SK-N-SH (cell line): ENCODE measurements at regions of chr9 and their contacts with region 1.

Region 1: DNA sequence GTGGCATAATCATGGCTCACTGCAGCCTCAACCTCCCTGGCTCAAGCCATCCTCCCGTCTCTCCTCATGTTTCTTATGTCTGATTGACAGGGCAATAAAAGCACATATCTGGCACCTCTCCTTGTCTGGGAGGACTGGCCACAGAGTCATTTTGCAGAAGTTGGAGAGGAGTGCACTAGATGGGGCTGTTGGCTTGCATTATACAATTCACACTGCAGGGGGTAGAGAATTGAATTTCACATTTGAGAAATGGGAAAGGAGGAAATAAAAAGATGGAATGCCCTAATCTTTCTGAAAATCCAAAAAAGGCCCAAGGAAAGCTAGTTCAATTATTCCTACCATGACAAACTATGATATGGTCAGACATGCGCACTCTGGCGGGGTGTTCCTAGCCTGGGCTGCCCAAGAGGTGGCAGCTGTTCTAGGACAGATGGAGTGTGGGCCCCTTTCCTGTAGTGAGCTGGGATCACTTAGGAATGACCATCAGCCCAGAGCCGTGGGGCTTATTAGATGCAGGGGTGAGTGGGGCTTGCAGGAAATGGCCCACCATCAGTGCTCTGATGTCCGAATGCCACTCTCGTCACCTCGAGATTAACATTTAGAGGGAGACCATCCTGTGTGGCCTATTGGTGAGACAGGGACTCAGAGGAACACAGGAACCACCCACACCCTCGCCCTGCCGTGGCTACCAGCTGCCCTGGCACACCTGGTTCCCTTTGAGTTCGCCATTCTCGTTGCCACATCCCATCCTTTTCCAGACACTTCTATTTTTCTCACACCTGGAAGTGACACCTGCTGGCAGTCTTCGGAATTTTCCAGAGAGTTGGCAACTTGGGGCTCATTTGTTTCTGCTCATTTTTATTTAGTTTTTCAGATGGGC is 21.8 kb upstream of the ANKRD18A start:
- DNase-seq: peak; percentile 71
- H3K4me3 ChIP-seq: no peak overlapping the region
- H3K27ac ChIP-seq: no peak overlapping the region
- H3K4me1 ChIP-seq: peaks cover 0 to 7% of the 10 kb centered on the region in 2 experiments; a peak in 1 of 4 replicates
- H3K27me3 ChIP-seq: no peaks in the 10 kb centered on the region
- CTCF ChIP-seq: peak; percentile 42
- EP300 ChIP-seq: no peak
- RAD21 ChIP-seq: peak; percentile 80

Region 2: GRCh38 chr9:38620483-38621433 is 21.5 kb before region 1 on chr9 and contains the start of gene ANKRD18A:
- CTCF ChIA-PET with region 1: interaction called, 22 read pairs
- POLR2A ChIA-PET with region 1: no interaction called
- DNase-seq: peak; percentile 91
- H3K4me3 ChIP-seq: peak within 1 kb of the TSS; percentile 54 to 61
- H3K27ac ChIP-seq: peak within 1 kb of the TSS in 1 of 2 experiments; percentile 72; a peak in 2 of 4 replicates
- H3K4me1 ChIP-seq: peaks cover 0 to 3% of the 10 kb centered on the region in 2 experiments; a peak in 3 of 4 replicates
- H3K27me3 ChIP-seq: peaks cover 36% of the 10 kb centered on the region
- CTCF ChIP-seq: peak; percentile 60
- EP300 ChIP-seq: no peak
- RAD21 ChIP-seq: peak; percentile 65
- polyA plus RNA-seq, gene ANKRD18A: 0.02 and 0.08 TPM in 2 replicates